ENCODE measurements at regions of chr11 and their contacts with region 1.

Region 1: GRCh38 chr11:68584097-68584496 is 100.2 kb upstream of the GAL start:
- DNase-seq: no peak
- ATAC-seq: peak; percentile 95
- H3K4me3 ChIP-seq: no peak overlapping the region
- H3K27ac ChIP-seq: no peak overlapping the region
- H3K4me1 ChIP-seq: no peaks in the 10 kb centered on the region
- H3K27me3 ChIP-seq: no peaks in the 10 kb centered on the region
- CTCF ChIP-seq: peak; percentile 49 to 77 (median 75)
- EP300 ChIP-seq: no peak
- POLR2A ChIP-seq: no peak
- RAD21 ChIP-seq: peak; percentile 34; the same call in 1 of the 2 replicates

Region 2: DNA sequence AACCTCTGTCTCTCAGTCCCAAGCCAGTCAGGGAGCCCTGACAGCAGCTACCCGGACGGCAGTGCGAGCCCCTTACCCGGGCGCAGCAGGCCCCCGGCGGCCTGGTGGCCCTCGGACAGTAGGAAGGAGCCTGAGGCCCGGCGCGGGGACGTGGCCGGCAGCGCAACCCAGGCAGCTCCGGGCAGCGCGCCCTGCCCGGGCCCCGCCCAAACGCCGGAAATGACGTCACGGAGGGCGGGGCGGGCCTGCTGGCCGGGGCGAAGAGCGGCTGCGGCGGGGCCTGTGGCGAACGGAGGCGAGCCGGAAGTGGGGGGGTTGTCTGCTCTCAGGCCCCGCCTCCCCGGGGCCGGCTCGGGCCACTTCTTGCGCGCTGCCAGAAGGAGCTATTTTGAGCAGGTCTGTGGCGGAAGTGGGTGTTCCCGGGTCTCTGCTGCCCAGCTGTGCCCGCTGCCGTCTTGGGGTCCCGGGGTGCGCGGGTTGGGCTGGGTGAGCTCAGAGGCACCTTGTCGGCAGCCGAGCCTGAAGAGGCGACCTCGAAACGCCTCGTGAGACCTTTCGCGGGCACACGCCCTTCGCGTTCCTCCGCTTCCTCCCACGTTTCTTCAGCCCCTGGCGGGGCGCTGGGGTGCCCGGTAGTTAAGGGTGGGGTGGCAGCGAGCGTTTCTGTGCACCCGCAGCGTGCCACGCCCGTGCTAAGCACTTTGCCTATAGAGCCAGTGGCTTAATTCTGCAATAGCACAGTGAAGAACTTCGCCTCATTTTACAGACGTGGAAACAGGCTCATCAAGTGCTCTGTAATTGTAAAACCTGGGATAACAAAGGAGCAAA is 312.1 kb before region 1 on chr11 and contains the start of gene C11orf24:
- CTCF ChIA-PET with region 1: no interaction called
- POLR2A ChIA-PET with region 1: no interaction called
- RAD21 ChIA-PET with region 1: no interaction called
- SMC1A ChIA-PET with region 1: no interaction called
- in situ Hi-C with region 1: no loop called
- intact Hi-C with region 1: no loop called
- DNase-seq: peak; percentile 82
- ATAC-seq: peak; percentile 84
- H3K4me3 ChIP-seq: peak within 1 kb of the TSS; percentile 97
- H3K27ac ChIP-seq: peak within 1 kb of the TSS; percentile 95
- H3K4me1 ChIP-seq: peaks cover 29% of the 10 kb centered on the region
- H3K27me3 ChIP-seq: no peaks in the 10 kb centered on the region
- CTCF ChIP-seq: no peak
- EP300 ChIP-seq: no peak
- POLR2A ChIP-seq: peak; percentile 93
- RAD21 ChIP-seq: no peak
- polyA plus RNA-seq, gene C11orf24: 4.3 to 9.9 TPM

Region 3: GRCh38 chr11:68565768-68566167 is 18.3 kb before region 1 on chr11:
- CTCF ChIA-PET with region 1: interaction called, 13 read pairs
- POLR2A ChIA-PET with region 1: no interaction called
- RAD21 ChIA-PET with region 1: no interaction called
- SMC1A ChIA-PET with region 1: no interaction called
- in situ Hi-C with region 1: no loop called
- intact Hi-C with region 1: no loop called
- DNase-seq: no peak
- ATAC-seq: no peak
- H3K4me3 ChIP-seq: no peak overlapping the region
- H3K27ac ChIP-seq: no peak overlapping the region
- H3K4me1 ChIP-seq: peaks cover 3% of the 10 kb centered on the region
- H3K27me3 ChIP-seq: no peaks in the 10 kb centered on the region
- CTCF ChIP-seq: no peak
- EP300 ChIP-seq: no peak
- POLR2A ChIP-seq: no peak
- RAD21 ChIP-seq: no peak

Region 4: GRCh38 chr11:68598816-68599653 is 14.9 kb after region 1 on chr11:
- CTCF ChIA-PET with region 1: interaction called, 12 read pairs
- POLR2A ChIA-PET with region 1: no interaction called
- RAD21 ChIA-PET with region 1: no interaction called
- SMC1A ChIA-PET with region 1: interaction called, 3 read pairs
- in situ Hi-C with region 1: no loop called
- intact Hi-C with region 1: no loop called
- DNase-seq: no peak
- ATAC-seq: no peak
- H3K4me3 ChIP-seq: no peak overlapping the region
- H3K27ac ChIP-seq: no peak overlapping the region
- H3K4me1 ChIP-seq: no peaks in the 10 kb centered on the region
- H3K27me3 ChIP-seq: no peaks in the 10 kb centered on the region
- CTCF ChIP-seq: no peak
- EP300 ChIP-seq: no peak
- POLR2A ChIP-seq: no peak
- RAD21 ChIP-seq: no peak

Region 5: GRCh38 chr11:68617925-68618809 is 34.1 kb after region 1 on chr11:
- CTCF ChIA-PET with region 1: no interaction called
- POLR2A ChIA-PET with region 1: no interaction called
- RAD21 ChIA-PET with region 1: no interaction called
- SMC1A ChIA-PET with region 1: no interaction called
- in situ Hi-C with region 1: no loop called
- intact Hi-C with region 1: no loop called
- DNase-seq: no peak
- ATAC-seq: no peak
- H3K4me3 ChIP-seq: no peak overlapping the region
- H3K27ac ChIP-seq: no peak overlapping the region
- H3K4me1 ChIP-seq: no peaks in the 10 kb centered on the region
- H3K27me3 ChIP-seq: no peaks in the 10 kb centered on the region
- CTCF ChIP-seq: no peak
- EP300 ChIP-seq: no peak
- POLR2A ChIP-seq: no peak
- RAD21 ChIP-seq: no peak

Region 6: DNA sequence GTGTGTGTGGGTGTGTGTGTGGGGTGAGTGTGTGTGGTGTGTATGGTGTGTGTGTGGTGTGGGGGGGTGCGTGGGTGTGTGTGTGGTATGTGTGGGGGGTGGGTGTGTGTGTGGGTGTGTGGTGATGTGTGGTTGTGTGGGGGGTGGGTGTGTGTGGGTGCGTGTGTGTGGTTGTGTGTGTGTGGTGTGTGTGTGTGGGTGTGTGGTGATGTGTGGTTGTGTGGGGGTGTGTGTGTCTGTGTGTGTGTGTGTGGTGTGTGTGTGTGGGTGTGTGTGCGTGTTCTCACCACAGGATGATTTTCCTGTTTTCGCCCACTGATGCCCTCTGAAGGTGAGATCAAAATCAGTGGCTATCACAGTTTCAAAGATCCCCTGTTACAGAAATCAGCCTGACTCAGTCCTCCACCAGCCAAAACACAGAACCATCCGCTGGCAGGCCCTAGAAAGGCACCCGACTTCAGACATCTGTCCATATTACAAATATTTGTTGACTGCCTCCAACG is 232.9 kb after region 1 on chr11:
- CTCF ChIA-PET with region 1: no interaction called
- POLR2A ChIA-PET with region 1: no interaction called
- RAD21 ChIA-PET with region 1: no interaction called
- SMC1A ChIA-PET with region 1: no interaction called
- in situ Hi-C with region 1: no loop called
- intact Hi-C with region 1: no loop called
- DNase-seq: no peak
- ATAC-seq: no peak
- H3K4me3 ChIP-seq: no peak overlapping the region
- H3K27ac ChIP-seq: no peak overlapping the region
- H3K4me1 ChIP-seq: no peaks in the 10 kb centered on the region
- H3K27me3 ChIP-seq: no peaks in the 10 kb centered on the region
- CTCF ChIP-seq: no peak
- EP300 ChIP-seq: no peak
- POLR2A ChIP-seq: no peak
- RAD21 ChIP-seq: no peak